Activated CD8-positive, alpha-beta T cell treated with anti-CD3 and anti-CD28 coated beads for 36 hours (primary cell): ENCODE measurements at regions of chr5 and their contacts with region 1.

Region 1: DNA sequence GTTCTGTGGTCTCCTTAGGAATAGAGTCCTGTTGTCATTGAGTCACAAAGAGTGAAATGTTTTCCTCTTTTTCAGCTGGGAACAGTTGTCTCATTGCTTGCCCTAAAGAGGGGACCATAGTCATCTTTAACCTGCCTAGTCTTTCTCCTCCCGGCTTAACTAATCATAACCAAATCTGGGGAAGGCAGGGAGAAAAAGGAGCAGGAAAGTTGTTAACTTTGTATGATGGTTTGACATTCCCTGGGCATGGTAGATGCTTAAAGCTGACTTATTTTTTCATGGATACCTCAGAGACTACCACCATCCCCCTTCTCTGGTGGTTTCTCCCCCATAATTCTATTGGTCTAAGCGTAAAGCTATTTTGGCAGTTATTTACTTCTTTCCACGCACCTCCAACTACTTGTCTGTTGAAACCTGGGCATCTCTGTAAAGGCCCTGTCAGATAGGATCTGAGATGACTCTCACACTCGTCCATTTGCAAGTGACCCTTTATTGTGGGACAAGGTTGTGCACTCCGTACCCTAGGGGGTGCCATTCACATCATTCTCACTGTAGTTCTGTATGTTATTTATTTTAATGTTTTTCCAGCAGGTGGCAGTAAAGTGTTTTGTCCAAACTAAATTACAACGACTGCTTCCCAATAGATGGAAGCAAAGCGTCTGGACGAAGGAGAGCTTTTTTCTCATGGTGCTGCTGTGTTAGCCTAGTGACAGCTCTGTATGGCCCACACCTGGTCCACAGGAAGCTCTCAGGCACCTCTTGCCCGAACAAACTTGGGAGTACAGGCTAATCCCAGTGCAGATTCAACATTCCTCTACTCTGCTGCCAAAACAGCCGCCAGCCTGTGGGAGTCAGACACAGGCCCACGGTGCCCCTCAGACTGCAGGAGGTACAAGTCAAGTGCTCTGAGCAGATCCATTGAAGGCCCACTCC is 3.0 kb upstream of the FAM13B start:
- DNase-seq: peak; percentile 81
- ATAC-seq: peak; percentile 67
- H3K4me3 Mint-ChIP-seq: no peak overlapping the region
- H3K27ac Mint-ChIP-seq: peak overlapping the region; percentile 6
- H3K4me1 Mint-ChIP-seq: peaks cover 27% of the 10 kb centered on the region
- H3K27me3 Mint-ChIP-seq: no peaks in the 10 kb centered on the region
- CTCF ChIP-seq: peak; percentile 88

Region 2: DNA sequence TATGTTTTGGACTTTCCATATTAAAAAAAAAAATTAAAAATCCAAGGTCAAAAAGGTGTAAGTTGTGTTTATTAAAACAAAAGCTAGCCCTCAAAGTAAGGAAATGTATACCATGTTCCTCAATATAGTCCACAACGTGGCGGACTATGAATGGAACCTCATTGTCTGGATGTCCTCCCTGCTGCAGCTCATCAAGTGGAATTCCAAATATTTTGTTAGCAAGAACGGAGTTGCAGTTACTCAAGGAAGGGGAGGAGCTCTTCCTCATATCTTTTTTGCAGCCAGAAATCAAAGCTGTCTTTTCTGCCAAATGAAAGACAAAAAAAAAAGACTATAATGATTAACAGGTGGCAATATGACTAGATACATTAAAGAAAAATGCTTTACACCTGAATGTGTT is 17.0 kb before region 1 on chr5:
- CTCF ChIA-PET with region 1: interaction called, 14 read pairs
- POLR2A ChIA-PET with region 1: interaction called, 3 read pairs
- intact Hi-C with region 1: no loop called
- DNase-seq: no peak
- ATAC-seq: no peak
- H3K4me3 Mint-ChIP-seq: no peak overlapping the region
- H3K27ac Mint-ChIP-seq: no peak overlapping the region
- H3K4me1 Mint-ChIP-seq: peaks cover 35% of the 10 kb centered on the region
- H3K27me3 Mint-ChIP-seq: no peaks in the 10 kb centered on the region
- CTCF ChIP-seq: no peak

Region 3: DNA sequence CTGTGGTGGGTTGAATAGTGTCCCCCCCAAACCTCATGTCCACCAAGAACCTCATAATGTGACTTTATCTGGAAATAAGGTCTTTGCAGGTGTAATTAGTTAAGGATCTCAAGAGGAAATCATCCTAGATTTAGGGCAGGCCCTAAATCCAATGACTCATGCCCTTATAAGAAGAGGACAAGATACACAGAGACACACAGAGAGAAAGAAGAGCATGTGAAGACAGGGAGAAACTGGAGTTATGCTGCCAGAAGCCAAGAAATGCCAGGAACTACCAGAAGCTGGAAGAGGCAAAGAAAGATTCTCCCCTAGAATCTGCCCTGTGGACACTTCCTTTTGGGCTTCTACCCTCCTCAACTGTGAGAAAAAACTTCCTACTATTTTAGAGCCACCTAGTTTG is 11.8 kb before region 1 on chr5:
- CTCF ChIA-PET with region 1: interaction called, 22 read pairs
- POLR2A ChIA-PET with region 1: interaction called, 4 read pairs
- intact Hi-C with region 1: no loop called
- DNase-seq: no peak
- ATAC-seq: no peak
- H3K4me3 Mint-ChIP-seq: no peak overlapping the region
- H3K27ac Mint-ChIP-seq: peak overlapping the region; percentile 4
- H3K4me1 Mint-ChIP-seq: peaks cover 63% of the 10 kb centered on the region
- H3K27me3 Mint-ChIP-seq: no peaks in the 10 kb centered on the region
- CTCF ChIP-seq: no peak

Region 4: GRCh38 chr5:138054847-138055558 is 19.1 kb after region 1 on chr5:
- CTCF ChIA-PET with region 1: interaction called, 24 read pairs
- POLR2A ChIA-PET with region 1: interaction called, 3 read pairs
- intact Hi-C with region 1: no loop called
- DNase-seq: no peak
- ATAC-seq: no peak
- H3K4me3 Mint-ChIP-seq: no peak overlapping the region
- H3K27ac Mint-ChIP-seq: no peak overlapping the region
- H3K4me1 Mint-ChIP-seq: peaks cover 2% of the 10 kb centered on the region
- H3K27me3 Mint-ChIP-seq: peaks cover 4% of the 10 kb centered on the region
- CTCF ChIP-seq: no peak

Region 5: DNA sequence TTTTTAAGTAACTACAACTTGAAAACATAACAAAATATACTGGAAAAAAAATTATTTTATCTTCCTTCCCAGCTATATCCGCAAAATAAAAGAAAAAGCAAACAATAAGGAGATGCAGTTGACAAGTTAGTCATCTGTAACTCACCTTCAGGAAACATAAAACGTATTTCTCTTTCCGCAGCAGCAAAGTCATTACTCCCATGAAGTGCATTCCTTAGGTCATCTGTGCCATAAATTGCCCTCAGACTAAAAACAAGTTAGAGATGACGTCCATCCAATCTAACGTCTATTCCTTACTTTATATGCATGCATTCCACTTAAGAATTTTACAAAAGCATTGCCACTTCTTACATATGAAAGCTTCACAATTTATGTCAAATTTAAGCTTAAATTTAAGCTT is 92.5 kb after region 1 on chr5:
- CTCF ChIA-PET with region 1: interaction called, 20 read pairs
- POLR2A ChIA-PET with region 1: no interaction called
- intact Hi-C with region 1: no loop called
- DNase-seq: no peak
- ATAC-seq: no peak
- H3K4me3 Mint-ChIP-seq: no peak overlapping the region
- H3K27ac Mint-ChIP-seq: no peak overlapping the region
- H3K4me1 Mint-ChIP-seq: no peaks in the 10 kb centered on the region
- H3K27me3 Mint-ChIP-seq: peaks cover 2% of the 10 kb centered on the region
- CTCF ChIP-seq: no peak